ENCODE measurements at regions of chr5 and their contacts with region 1.

Region 1: DNA sequence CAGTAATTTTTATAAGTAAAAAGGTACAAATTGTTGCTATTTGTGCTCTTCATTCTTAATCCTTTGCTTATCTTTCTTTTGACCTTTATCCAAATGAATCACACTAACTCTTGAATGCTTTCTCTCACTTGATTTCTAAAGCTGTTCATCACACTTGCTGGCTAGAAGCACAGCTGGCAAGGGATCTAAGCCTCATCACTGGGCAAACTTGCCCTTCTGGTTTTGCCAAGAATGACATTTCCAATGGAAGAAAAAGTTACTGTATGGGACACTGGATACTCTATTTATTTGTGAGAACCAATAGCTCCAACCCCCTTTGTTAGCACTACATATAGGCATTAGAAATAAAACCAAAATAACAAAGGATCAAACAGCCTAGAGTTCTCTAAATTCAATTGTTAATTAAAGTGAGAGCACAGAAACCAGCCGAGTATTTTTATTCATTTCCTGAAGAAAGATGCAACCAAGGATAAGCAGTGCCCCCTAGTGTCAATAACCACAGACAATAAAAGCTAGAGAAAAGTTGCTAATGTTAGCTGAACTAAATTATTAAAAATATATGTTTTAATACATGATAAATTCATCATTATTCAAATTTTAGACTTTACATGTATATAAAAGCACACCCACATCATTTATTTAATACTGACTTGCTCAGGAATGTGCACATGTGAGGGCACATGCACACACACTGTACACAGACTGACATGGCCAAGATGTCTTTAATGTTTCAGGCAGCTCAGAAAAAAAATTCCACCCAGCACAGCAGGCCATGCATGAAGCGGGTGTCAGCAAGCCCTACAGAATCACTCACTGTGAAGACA is 59.8 kb upstream of the POU5F2 start:
- DNase-seq: no peak
- ATAC-seq: no peak

Region 2: DNA sequence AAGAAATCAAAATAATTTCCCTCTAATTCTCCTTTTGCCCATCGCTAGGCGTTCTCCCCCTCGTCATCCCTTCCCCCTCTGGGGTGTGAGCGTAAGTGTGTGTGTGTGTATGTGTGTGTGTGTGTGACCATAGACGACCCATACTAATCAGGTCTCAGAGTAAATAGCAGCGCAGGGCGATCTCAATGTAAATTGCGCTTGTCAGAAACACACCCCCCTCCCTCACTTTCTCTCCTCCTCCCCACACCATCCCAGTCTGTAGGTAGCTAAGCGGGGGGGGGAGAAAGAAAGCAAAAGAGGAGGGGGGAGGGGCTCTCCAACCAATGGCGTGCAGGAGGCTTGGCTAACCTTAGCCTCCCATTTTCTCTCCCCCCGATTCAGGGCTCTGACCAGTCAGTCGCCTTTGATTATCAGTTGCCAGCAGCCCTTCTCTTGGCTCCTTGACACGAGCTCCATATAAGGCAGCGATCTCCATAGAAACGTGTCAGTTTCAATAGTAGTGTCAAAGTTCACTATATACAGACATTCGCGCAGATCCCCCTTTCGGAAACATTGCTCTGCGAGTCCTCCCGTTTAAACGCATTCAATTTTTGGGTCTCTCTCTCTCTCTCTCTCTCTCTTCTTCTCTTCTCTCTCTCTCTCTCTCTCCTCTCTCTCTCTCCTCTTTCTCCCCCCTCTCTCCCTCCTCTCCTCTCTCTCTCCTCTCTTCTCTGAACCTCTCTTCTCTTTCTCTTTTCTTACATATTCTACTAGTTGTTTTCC is 218.3 kb before region 1 on chr5 and contains the start of gene NR2F1:
- intact Hi-C with region 1: loop called (anchors 5 kb)
- DNase-seq: peak; percentile 55
- ATAC-seq: no peak
- total RNA-seq, gene NR2F1: 1.3 TPM

Region 3: DNA sequence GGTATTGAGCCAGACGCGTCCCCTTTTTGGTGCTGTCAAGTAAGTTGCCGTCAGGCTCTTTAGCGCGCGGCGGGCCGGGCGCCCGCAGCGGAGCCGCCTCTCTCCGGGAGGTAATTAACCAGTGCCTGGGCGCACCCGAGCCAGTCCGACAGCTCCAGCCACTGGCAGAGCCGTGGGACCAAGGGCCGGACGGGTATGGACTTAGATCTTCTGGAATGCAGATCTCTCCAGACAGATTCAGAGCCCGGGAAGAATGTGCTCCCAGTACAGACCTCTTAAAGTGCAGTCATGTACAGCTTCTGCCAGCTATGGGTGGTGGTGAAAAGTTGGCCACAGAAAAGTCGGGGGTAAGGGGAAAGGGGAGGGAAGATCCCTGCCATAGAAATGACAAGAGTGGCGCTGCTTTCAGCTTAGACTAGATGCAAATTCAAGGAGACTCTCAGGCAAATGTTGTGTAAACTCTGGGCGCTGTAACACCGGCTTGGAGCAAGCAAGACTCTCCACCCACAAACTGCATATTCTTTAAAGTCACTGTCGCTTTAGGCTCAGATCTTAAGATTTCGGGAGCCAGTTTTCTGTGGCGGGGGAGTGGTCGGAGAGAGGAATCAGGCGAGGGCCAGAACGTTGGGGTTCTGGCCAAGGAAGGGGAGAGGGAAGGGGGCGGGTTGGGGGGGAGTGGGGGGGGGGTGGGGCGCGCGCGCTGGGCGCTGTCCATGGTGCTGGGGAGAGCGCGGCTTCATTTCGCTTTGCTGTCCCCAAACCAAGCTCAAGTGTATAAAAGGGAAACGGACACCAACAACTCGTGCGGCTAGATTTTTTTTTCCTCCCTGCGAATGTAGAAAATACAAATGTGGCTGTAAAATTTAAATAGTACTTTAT is 189.0 kb before region 1 on chr5:
- intact Hi-C with region 1: loop called (anchors 10 kb)
- DNase-seq: peak; percentile 53
- ATAC-seq: no peak

Region 4: GRCh38 chr5:93874080-93874479 is 72.9 kb after region 1 on chr5:
- intact Hi-C with region 1: no loop called
- DNase-seq: no peak
- ATAC-seq: no peak

Region 5: GRCh38 chr5:94276751-94277150 is 475.6 kb after region 1 on chr5:
- intact Hi-C with region 1: no loop called
- DNase-seq: no peak
- ATAC-seq: no peak